ENCODE measurements at regions of chr6 and their contacts with region 1.

Region 1: DNA sequence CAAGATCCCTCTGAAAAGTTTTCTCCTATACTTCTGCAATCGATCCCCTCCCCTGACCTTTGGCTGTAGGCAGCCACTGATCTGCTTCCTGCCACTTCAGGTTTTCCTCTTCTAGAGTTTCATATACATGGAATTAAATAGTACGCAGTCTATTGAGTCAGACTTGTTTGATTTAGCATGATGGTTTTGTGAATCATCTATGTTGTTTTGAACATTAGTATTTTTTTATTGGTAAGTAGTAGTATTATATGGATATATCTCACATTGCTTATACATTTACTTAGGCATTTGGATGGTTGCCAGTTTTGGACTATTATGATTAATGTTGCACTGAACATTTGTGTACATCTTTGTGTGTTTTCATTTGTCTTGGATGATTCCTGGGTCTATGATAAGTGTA is 518.0 kb downstream of the CD109 start:
- DNase-seq: no peak
- H3K4me3 ChIP-seq: no peak overlapping the region
- H3K27ac ChIP-seq: no peak overlapping the region
- H3K4me1 ChIP-seq: no peaks in the 10 kb centered on the region
- H3K27me3 ChIP-seq: no peaks in the 10 kb centered on the region
- CTCF ChIP-seq: no peak

Region 2: DNA sequence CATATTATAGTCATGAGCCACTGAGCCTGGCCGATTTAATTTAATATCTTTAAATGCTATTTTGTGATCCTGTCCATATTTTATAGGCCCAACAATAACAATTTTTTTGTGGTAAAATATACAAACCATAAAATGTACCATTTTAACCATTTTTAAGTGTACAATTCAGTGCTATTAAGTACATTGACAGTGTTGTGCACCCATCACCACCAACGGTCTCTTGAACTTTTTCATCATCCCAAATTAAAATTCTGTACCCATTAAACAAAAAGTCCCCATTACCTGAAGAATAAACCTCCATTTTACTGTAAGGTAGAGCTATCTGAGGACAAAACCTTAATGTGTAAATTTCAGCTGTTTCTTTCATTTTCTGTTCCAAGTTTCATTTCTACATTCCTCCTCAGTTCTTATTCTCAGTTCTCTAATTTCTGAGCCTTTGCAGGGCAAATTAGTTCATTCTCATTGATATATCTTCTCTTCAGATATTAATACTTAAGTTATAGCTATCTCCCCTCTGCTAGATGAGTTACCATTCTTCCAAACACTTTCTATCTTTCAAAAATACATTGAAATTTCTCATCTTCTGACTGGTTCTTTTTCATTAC is 742.2 kb before region 1 on chr6:
- CTCF ChIA-PET with region 1: no interaction called
- POLR2A ChIA-PET with region 1: no interaction called
- intact Hi-C with region 1: no loop called
- DNase-seq: no peak
- H3K4me3 ChIP-seq: no peak overlapping the region
- H3K27ac ChIP-seq: no peak overlapping the region
- H3K4me1 ChIP-seq: no peaks in the 10 kb centered on the region
- H3K27me3 ChIP-seq: no peaks in the 10 kb centered on the region
- CTCF ChIP-seq: no peak

Region 3: GRCh38 chr6:74187811-74188210 is 26.2 kb before region 1 on chr6:
- CTCF ChIA-PET with region 1: no interaction called
- POLR2A ChIA-PET with region 1: no interaction called
- intact Hi-C with region 1: no loop called
- DNase-seq: no peak
- H3K4me3 ChIP-seq: no peak overlapping the region
- H3K27ac ChIP-seq: no peak overlapping the region
- H3K4me1 ChIP-seq: no peaks in the 10 kb centered on the region
- H3K27me3 ChIP-seq: no peaks in the 10 kb centered on the region
- CTCF ChIP-seq: no peak

Region 4: GRCh38 chr6:74851596-74851995 is 637.6 kb after region 1 on chr6:
- CTCF ChIA-PET with region 1: no interaction called
- POLR2A ChIA-PET with region 1: interaction called, 10 read pairs
- intact Hi-C with region 1: no loop called
- DNase-seq: no peak
- H3K4me3 ChIP-seq: no peak overlapping the region
- H3K27ac ChIP-seq: no peak overlapping the region
- H3K4me1 ChIP-seq: no peaks in the 10 kb centered on the region
- H3K27me3 ChIP-seq: no peaks in the 10 kb centered on the region
- CTCF ChIP-seq: no peak